Thyroid gland (tissue), 4 donors: ENCODE measurements at regions of chr13 and their contacts with region 1.

Region 1: GRCh38 chr13:26985285-26985878 is 186.2 kb downstream of the USP12 start:
- DNase-seq: peak; percentile 66 to 67
- H3K4me3 ChIP-seq: no peak overlapping the region
- H3K27ac ChIP-seq: no peak overlapping the region
- H3K4me1 ChIP-seq: no peaks in the 10 kb centered on the region
- H3K27me3 ChIP-seq: no peaks in the 10 kb centered on the region
- CTCF ChIP-seq: peak; percentile 31 to 88 (median 78)
- POLR2A ChIP-seq: no peak

Region 2: GRCh38 chr13:27203854-27204253 is 218.5 kb after region 1 on chr13:
- intact Hi-C with region 1: loop called (anchors 10 kb)
- DNase-seq: peak in 1 of 2 donors; percentile 1
- H3K4me3 ChIP-seq: no peak overlapping the region
- H3K27ac ChIP-seq: no peak overlapping the region
- H3K4me1 ChIP-seq: no peaks in the 10 kb centered on the region
- H3K27me3 ChIP-seq: no peaks in the 10 kb centered on the region
- CTCF ChIP-seq: peak in 1 of 6 experiments; percentile 12
- POLR2A ChIP-seq: no peak

Region 3: DNA sequence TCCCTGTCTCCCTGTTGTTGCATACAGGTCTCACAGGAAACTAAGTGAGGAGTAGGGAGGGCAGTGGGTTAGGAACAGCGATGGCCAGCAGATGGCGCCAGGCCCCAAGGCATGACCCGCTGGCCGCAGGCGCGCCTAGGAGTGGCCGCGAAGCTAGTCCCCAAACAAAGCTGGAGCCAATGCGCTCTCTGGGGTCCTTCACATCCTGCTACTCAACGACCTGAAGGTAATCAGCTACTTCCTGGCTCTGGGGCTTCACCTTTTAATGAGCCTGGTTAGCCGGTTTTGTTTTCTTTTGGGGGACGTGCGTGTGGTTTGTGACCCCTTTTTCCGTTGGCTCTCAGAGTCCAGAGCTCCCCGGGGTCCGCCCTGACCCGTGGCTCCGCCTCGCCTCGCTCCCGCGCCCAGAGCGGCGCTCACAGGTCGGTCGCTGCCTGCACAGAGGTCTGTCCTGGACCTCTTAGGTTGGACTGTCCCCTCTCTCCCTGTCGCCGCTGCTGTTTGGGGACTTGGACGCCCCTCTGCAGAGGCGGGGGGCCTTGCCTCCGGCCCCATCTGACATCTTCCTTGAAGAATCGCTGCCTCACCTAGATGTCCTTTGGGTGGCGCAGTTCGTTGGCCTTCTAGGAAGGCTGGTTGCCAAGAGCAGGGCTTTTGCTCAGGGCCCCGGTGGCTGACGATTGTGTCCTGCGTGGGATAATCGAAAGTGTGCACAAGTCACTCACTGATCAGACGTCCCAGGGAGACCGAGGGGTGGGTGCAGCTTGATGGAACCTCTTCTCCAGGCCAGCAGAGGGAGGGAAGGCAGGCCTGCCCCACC is 376.9 kb after region 1 on chr13:
- intact Hi-C with region 1: loop called (anchors 2 kb)
- DNase-seq: peak; percentile 80 to 86
- H3K4me3 ChIP-seq: peak overlapping the region in 2 of 3 donors; percentile 2 to 21
- H3K27ac ChIP-seq: no peak overlapping the region
- H3K4me1 ChIP-seq: peaks cover 0 to 3% of the 10 kb centered on the region in 2 donors
- H3K27me3 ChIP-seq: no peaks in the 10 kb centered on the region
- CTCF ChIP-seq: peak; percentile 69 to 96 (median 85)
- POLR2A ChIP-seq: no peak

Region 4: GRCh38 chr13:27980280-27980998 is 995.1 kb after region 1 on chr13:
- intact Hi-C with region 1: loop called (anchors 10 kb)
- DNase-seq: no peak
- H3K4me3 ChIP-seq: no peak overlapping the region
- H3K27ac ChIP-seq: no peak overlapping the region
- H3K4me1 ChIP-seq: peaks cover 0 to 18% of the 10 kb centered on the region in 2 donors
- H3K27me3 ChIP-seq: peaks cover 39% of the 10 kb centered on the region
- CTCF ChIP-seq: no peak
- POLR2A ChIP-seq: no peak